A549 (cell line): ENCODE measurements at regions of chr16 and their contacts with region 1.

Region 1: DNA sequence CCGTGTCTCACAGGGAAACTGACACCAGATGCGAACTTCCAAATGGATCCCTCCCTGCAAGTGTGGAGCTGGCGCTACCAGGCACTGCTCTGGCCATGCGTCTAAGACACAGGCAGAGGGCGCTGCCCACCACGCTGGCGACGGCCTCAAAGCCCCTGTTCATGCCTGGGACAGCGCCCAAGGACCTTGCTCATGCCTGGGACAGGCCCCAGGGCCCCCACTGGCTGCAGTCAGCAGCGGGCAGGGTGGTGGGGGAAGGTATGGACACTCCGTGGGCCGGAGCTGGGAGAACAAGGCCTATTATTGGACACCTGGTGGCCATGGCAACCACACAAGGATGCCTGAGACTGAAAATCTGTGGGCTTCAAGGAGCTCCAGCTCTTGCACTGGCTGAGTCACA is 8.8 kb downstream of the ZG16B start:
- DNase-seq: peak; percentile 85 to 88
- ATAC-seq: peak; percentile 76 to 91
- H3K4me3 ChIP-seq: no peak overlapping the region
- H3K27ac ChIP-seq: peak overlapping the region; percentile 60 to 90
- H3K4me1 ChIP-seq: peaks cover 41% of the 10 kb centered on the region
- CTCF ChIP-seq: peak; percentile 86
- EP300 ChIP-seq: no peak
- POLR2A ChIP-seq: no peak
- RAD21 ChIP-seq: peak; percentile 90 to 96

Region 2: DNA sequence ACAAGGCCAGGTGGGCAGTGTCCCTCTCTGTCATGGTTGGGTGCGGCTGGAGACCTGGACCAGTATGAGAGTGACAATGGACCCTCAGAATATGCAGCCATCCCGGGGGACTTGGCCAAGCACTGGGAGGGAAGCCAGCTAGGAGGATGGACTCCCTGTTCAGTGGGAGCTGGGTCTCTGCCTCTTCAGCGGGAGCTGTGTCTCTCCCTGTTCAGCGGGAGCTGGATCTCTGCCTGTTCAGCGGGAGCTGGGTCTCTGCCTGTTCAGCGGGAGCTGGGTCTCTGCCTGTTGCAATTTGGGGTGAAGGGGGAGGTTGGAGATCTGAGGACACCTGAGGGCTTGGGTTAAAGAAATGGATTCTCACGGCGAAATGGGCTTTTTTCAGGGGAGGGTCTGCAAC is 47.8 kb before region 1 on chr16:
- CTCF ChIA-PET with region 1: interaction called, 11 read pairs
- POLR2A ChIA-PET with region 1: no interaction called
- DNase-seq: no peak
- ATAC-seq: no peak
- H3K4me3 ChIP-seq: no peak overlapping the region
- H3K27ac ChIP-seq: no peak overlapping the region
- H3K4me1 ChIP-seq: peaks cover 22% of the 10 kb centered on the region
- CTCF ChIP-seq: no peak
- EP300 ChIP-seq: no peak
- POLR2A ChIP-seq: no peak
- RAD21 ChIP-seq: no peak

Region 3: GRCh38 chr16:2854700-2855309 is 15.9 kb after region 1 on chr16:
- CTCF ChIA-PET with region 1: interaction called, 91 read pairs
- POLR2A ChIA-PET with region 1: interaction called, 3 read pairs
- DNase-seq: no peak
- ATAC-seq: no peak
- H3K4me3 ChIP-seq: no peak overlapping the region
- H3K27ac ChIP-seq: no peak overlapping the region
- H3K4me1 ChIP-seq: peaks cover 13% of the 10 kb centered on the region
- CTCF ChIP-seq: peak; percentile 42
- EP300 ChIP-seq: no peak
- POLR2A ChIP-seq: no peak
- RAD21 ChIP-seq: peak; percentile 20 to 33; a peak in 2 of 5 replicates

Region 4: DNA sequence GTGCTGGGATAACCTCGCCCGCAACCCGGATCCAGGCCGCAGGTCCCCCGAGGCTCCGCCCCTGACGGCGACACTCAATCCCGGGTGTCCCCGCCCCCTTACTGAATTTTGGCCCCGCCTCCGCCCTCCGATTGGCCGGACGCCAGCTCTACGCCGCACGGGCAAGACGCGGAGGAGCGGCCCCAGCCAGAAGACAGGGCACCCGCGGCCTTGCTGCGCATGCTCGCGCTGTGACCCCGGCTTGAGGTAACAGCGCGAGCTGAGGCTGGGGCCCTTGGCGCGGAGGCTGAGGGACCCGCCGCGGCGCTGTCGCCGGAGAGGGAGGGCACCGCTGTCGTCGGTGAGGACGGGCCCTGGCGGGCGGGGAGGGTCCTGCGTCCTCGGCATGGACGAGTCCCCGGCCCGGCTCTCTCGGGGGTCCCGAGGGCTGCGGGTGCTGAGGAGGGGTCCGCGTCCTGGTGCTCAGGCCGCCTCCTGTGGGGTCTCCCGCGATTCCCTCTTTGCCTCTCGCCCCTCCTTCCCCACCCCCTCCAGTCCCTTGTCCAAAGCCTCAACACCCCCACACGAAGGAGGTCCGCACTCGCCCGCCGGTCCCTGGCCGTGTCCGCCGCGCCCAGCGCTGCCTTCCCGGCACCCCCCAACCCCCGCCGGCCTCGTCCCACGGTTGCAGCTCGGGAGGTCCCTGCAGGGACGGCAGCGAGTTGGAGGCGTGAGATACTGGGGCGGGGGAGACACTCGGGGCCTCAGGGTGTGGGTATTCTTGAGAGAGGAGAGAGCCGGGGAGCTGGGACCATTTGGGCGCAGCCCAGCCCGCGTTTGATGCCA is 44.3 kb after region 1 on chr16 and contains the start of gene FLYWCH2:
- CTCF ChIA-PET with region 1: interaction called, 17 read pairs
- POLR2A ChIA-PET with region 1: interaction called, 6 read pairs
- DNase-seq: peak; percentile 83 to 97
- ATAC-seq: peak; percentile 80 to 86
- H3K4me3 ChIP-seq: peak within 1 kb of the TSS; percentile 94
- H3K27ac ChIP-seq: peak within 1 kb of the TSS; percentile 96 to 97
- H3K4me1 ChIP-seq: peaks cover 5% of the 10 kb centered on the region; the same call in 2 of the 3 replicates
- CTCF ChIP-seq: no peak
- EP300 ChIP-seq: no peak
- POLR2A ChIP-seq: peak; percentile 87
- RAD21 ChIP-seq: no peak
- polyA plus RNA-seq, gene FLYWCH2: 22.7 and 23.2 TPM in 2 replicates

Region 5: GRCh38 chr16:2905431-2906387 is 66.8 kb after region 1 on chr16:
- CTCF ChIA-PET with region 1: interaction called, 87 read pairs
- POLR2A ChIA-PET with region 1: interaction called, 14 read pairs
- DNase-seq: peak; percentile 98 to 100
- ATAC-seq: peak; percentile 80 to 88
- H3K4me3 ChIP-seq: peak overlapping the region; percentile 80; the same call in 2 of the 3 replicates
- H3K27ac ChIP-seq: peak overlapping the region in 1 of 2 experiments; percentile 98; a peak in 2 of 6 replicates
- H3K4me1 ChIP-seq: peaks cover 19% of the 10 kb centered on the region
- CTCF ChIP-seq: no peak
- EP300 ChIP-seq: no peak
- POLR2A ChIP-seq: no peak
- RAD21 ChIP-seq: no peak

Region 6: DNA sequence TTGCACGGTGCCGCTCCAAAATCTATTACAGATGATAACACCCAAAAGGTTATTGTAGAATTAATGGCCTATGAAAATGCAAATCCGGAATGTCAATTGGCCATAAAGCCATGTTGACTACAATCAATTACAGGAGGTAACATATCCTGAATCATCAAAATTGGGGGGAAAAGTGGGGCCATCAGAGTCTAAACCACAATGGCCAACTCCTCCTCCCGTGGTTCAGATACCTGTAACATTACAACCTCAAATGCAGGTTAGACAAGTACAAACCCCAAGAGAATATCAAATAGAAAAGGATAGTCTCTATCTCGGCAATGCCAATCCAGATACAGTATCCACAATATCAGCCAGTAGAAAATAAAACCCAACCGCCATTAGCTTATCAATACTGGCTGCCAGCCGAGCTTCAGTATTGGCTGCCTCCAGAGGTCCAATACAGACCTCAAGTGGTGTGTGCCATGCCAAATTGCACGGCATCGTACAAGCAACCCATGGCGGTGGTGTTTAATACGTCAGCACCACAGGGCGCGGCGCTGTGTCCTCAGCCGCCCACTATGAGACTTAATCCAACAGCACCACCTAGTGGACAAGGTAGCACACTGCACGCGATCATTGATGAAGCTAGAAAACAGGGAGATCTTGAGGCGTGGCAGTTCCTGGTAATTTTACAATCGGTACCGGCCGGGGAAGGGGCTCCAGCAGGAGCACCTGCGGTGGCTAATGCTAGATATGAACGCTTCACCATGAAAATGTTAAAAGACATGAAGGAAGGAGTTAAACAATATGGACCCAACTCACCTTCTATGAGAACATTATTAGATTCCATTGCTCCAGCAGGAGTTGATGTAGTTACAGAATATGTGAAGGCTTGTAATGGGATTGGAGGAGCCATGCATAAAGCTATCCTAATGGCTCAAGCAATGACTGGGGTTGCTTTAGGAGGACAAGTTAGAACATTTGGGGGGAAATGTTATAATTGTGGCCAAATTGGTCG is 88.0 kb after region 1 on chr16:
- CTCF ChIA-PET with region 1: interaction called, 87 read pairs
- POLR2A ChIA-PET with region 1: no interaction called
- DNase-seq: peak; percentile 55 to 89
- ATAC-seq: peak; percentile 89 to 93
- H3K4me3 ChIP-seq: no peak overlapping the region
- H3K27ac ChIP-seq: 0 out of 6 replicates have a peak overlapping the region, but pooled peaks of 1 of the 2 experiments have one; percentile 2
- H3K4me1 ChIP-seq: peaks cover 3% of the 10 kb centered on the region; the same call in 1 of the 3 replicates
- CTCF ChIP-seq: peak; percentile 91
- EP300 ChIP-seq: no peak
- POLR2A ChIP-seq: no peak
- RAD21 ChIP-seq: peak; percentile 73 to 79